ENCODE measurements at regions of chr11 and their contacts with region 1.

Region 1: DNA sequence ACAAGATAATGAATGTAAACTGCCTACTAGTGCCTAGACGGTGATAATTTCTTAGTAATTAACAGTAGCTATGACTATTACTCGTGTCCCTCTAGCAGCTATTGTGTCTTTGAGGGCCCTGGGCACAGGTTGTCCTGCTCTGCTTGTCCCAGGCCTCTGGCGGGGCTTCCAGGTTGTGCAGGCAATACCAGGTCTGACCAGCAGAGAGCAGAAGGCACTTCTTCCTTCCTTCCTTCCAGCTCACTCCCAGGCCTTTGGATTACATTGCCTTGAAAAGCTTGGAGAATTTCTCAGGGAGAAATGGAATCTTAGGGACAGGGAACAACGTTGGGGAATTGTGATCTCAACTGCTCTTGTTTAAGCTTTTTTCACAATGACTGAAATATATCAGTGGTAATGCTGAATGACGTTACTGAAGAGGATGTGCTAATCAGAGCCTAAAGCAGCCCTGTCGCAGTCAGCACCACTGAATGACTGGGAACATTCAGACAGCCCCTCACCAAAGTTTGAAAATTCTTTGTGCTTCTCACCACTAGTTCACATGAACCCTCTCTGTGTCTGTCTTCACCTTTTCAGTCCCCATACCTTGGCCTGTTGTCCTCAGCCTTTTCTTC is 8.4 kb upstream of the CCKBR start:
- DNase-seq: peak; percentile 69
- ATAC-seq: peak; percentile 98
- H3K4me3 ChIP-seq: no peak overlapping the region
- H3K27ac ChIP-seq: no peak overlapping the region
- H3K4me1 ChIP-seq: no peaks in the 10 kb centered on the region
- H3K27me3 ChIP-seq: peaks cover 10% of the 10 kb centered on the region
- CTCF ChIP-seq: peak; percentile 96

Region 2: DNA sequence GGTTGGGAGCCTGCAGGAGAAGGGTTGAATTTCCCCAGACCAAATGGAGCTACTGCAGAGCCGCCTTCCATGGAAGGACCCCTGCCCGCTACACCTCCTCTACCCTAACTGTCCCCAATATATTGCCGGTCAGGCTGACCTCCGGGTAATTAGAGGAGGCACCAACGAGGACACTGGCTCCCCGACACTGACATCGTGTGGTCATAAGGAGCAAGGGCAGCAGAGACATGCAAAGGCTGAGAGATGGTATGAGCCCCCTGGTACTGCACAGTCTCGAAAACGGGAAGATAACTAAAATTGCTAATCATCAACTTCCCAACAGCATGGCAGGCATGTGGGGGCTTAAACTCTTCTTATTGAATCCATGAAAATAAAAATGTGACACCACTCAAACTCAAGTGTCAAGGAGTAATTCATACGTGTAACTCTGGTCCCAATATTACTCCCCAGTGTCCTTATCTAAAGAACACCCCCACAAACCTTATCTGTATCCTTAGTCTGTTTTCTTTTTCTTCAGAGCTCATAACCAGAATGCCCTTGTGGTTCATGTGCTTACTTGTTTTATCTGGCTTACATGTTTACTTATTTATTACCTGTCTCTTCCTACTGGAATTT is 64.7 kb after region 1 on chr11:
- CTCF ChIA-PET with region 1: interaction called, 7 read pairs
- POLR2A ChIA-PET with region 1: no interaction called
- in situ Hi-C with region 1: no loop called
- intact Hi-C with region 1: loop called (anchors 2 kb)
- DNase-seq: no peak
- ATAC-seq: peak; percentile 57
- H3K4me3 ChIP-seq: no peak overlapping the region
- H3K27ac ChIP-seq: no peak overlapping the region
- H3K4me1 ChIP-seq: peaks cover 2% of the 10 kb centered on the region
- H3K27me3 ChIP-seq: peaks cover 23% of the 10 kb centered on the region
- CTCF ChIP-seq: peak; percentile 98

Region 3: GRCh38 chr11:6353367-6353987 is 102.2 kb after region 1 on chr11:
- CTCF ChIA-PET with region 1: interaction called, 31 read pairs
- POLR2A ChIA-PET with region 1: no interaction called
- in situ Hi-C with region 1: no loop called
- intact Hi-C with region 1: loop called (anchors 2 kb)
- DNase-seq: peak; percentile 55
- ATAC-seq: peak; percentile 86
- H3K4me3 ChIP-seq: no peak overlapping the region
- H3K27ac ChIP-seq: no peak overlapping the region
- H3K4me1 ChIP-seq: no peaks in the 10 kb centered on the region
- H3K27me3 ChIP-seq: no peaks in the 10 kb centered on the region
- CTCF ChIP-seq: peak; percentile 99